ENCODE measurements at regions of chr16 and their contacts with region 1.

Region 1: DNA sequence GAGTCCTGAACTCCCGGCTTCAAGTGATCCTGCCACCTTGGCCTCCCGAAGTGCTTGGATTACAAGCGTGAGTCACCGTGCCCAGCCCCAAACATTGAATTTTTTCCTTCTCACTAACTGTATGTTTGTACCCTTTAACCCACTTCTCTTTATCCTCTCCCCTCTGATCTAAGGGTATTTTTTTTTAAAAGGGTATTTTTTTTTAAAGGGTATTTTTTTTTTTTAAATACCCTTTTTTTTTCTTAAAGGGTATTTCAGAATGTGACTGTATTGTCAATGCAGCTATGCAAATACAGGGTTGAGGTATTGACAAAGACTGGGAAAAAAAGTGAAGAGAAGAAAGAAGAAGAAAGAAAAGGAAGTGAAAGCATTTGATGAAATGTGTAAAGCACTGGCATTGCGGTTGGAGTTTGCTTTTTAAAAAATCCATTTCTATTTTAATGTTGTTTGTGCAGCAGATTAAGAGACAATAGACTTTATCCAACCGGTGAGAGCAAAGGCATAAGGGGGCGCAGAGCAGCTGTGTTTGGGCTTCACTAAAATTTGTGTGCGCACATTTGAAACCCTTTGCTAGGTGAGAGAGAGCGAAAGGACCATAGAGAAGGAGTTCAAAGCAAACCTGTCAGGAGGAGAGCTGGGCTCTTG is 42.4 kb downstream of the SYT17 start:
- DNase-seq: peak; percentile 85
- ATAC-seq: peak; percentile 73
- H3K4me3 ChIP-seq: peak overlapping the region in 4 of 5 experiments; percentile 32 to 63 (median 48)
- H3K4me3 Mint-ChIP-seq: peak overlapping the region; percentile 85
- H3K27ac ChIP-seq: peak overlapping the region; percentile 96
- H3K27ac Mint-ChIP-seq: peak overlapping the region; percentile 95
- H3K4me1 ChIP-seq: peaks cover 41 to 71% of the 10 kb centered on the region in 2 donors
- H3K4me1 Mint-ChIP-seq: peaks cover 60% of the 10 kb centered on the region
- H3K27me3 ChIP-seq: no peaks in the 10 kb centered on the region
- H3K27me3 Mint-ChIP-seq: no peaks in the 10 kb centered on the region
- CTCF ChIP-seq: no peak

Region 2: GRCh38 chr16:19113453-19114351 is 96.7 kb before region 1 on chr16 and contains the start of gene ITPRIPL2:
- CTCF ChIA-PET with region 1: no interaction called
- POLR2A ChIA-PET with region 1: no interaction called
- intact Hi-C with region 1: loop called (anchors 5 kb)
- DNase-seq: peak; percentile 54
- ATAC-seq: peak; percentile 41
- H3K4me3 ChIP-seq: peak within 1 kb of the TSS in 4 of 5 experiments; percentile 28 to 53 (median 43)
- H3K4me3 Mint-ChIP-seq: peak within 1 kb of the TSS; percentile 86
- H3K27ac ChIP-seq: no peak within 1 kb of the TSS
- H3K27ac Mint-ChIP-seq: peak within 1 kb of the TSS; percentile 84
- H3K4me1 ChIP-seq: peaks cover 20 to 30% of the 10 kb centered on the region in 2 donors
- H3K4me1 Mint-ChIP-seq: peaks cover 38% of the 10 kb centered on the region
- H3K27me3 ChIP-seq: peaks cover 0 to 12% (median 0%) of the 10 kb centered on the region in 4 experiments
- H3K27me3 Mint-ChIP-seq: peaks cover 13% of the 10 kb centered on the region
- CTCF ChIP-seq: no peak
- total RNA-seq, gene ITPRIPL2: 14.6 and 15.4 TPM in 2 replicates

Region 3: DNA sequence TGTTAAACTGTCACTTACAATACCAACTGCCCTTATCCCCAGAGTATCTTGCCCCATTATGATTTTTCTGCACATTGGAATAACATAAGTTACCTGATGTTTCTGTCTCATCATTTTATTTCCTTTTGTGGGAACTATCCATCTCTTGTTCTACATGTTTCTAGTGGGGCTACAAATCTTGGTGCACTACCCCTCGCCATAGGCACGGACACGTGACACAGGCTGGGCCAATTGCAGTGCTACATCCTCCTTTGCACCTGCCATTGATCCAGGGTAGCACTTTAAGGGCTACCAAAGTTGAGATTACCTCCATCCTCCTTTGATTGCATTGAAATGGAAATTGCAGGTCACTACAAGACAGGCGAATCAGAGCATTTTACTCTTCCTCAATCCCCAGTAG is 56.5 kb before region 1 on chr16:
- CTCF ChIA-PET with region 1: no interaction called
- POLR2A ChIA-PET with region 1: no interaction called
- intact Hi-C with region 1: no loop called
- DNase-seq: no peak
- ATAC-seq: no peak
- H3K4me3 ChIP-seq: no peak overlapping the region
- H3K4me3 Mint-ChIP-seq: no peak overlapping the region
- H3K27ac ChIP-seq: no peak overlapping the region
- H3K27ac Mint-ChIP-seq: no peak overlapping the region
- H3K4me1 ChIP-seq: no peaks in the 10 kb centered on the region
- H3K4me1 Mint-ChIP-seq: no peaks in the 10 kb centered on the region
- H3K27me3 ChIP-seq: peaks cover 0 to 3% (median 0%) of the 10 kb centered on the region in 4 experiments
- H3K27me3 Mint-ChIP-seq: peaks cover 13% of the 10 kb centered on the region
- CTCF ChIP-seq: no peak

Region 4: DNA sequence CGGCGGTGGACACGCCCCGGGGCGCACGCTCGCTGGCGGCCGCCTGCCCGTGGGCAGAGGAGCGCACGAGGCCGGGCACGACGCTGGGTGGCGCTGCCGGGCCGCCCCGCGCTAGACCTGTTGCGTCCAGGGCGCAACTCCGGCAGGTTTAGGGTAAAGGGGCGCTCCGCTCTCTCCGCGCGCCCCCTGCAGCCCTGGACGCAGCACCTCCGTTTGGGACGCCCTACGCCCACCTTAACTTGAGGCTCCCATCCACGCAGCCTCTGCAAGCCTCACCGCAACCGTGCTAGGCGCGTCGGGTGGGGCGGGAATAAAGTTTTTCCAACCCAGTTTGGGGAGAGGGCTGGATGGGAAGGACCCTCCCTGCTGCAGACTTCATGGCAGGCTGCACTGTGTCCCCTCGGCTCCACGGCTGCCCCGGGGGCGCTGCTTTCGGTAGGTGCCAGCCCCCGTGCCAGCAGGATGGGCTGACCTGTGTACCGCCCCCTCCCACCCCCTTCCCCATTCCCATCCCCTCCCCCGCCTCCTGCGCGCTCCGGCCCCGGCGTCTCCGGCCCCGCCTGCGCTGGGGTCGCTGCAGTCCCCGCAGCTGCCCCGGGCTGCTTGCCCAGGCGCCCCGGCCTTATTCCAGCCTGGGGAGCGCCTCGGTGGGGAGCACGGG is 42.6 kb before region 1 on chr16 and contains the start of gene SYT17:
- CTCF ChIA-PET with region 1: no interaction called
- POLR2A ChIA-PET with region 1: no interaction called
- intact Hi-C with region 1: loop called (anchors 1 kb)
- DNase-seq: peak; percentile 85
- ATAC-seq: peak; percentile 88
- H3K4me3 ChIP-seq: peak within 1 kb of the TSS in 4 of 5 experiments; percentile 50 to 69 (median 59)
- H3K4me3 Mint-ChIP-seq: peak within 1 kb of the TSS; percentile 85
- H3K27ac ChIP-seq: peak within 1 kb of the TSS in 1 of 2 donors; percentile 3
- H3K27ac Mint-ChIP-seq: peak within 1 kb of the TSS; percentile 81
- H3K4me1 ChIP-seq: peaks cover 11 to 28% of the 10 kb centered on the region in 2 donors
- H3K4me1 Mint-ChIP-seq: peaks cover 30% of the 10 kb centered on the region
- H3K27me3 ChIP-seq: peaks cover 0 to 16% (median 0%) of the 10 kb centered on the region in 4 experiments
- H3K27me3 Mint-ChIP-seq: peaks cover 11% of the 10 kb centered on the region
- CTCF ChIP-seq: peak; percentile 82
- total RNA-seq, gene SYT17: 25.1 and 27.7 TPM in 2 replicates

Region 5: GRCh38 chr16:19375561-19376158 is 165.3 kb after region 1 on chr16:
- CTCF ChIA-PET with region 1: interaction called, 6 read pairs
- POLR2A ChIA-PET with region 1: no interaction called
- intact Hi-C with region 1: loop called (anchors 2 kb)
- DNase-seq: peak; percentile 77
- ATAC-seq: peak; percentile 76
- H3K4me3 ChIP-seq: no peak overlapping the region
- H3K4me3 Mint-ChIP-seq: no peak overlapping the region
- H3K27ac ChIP-seq: no peak overlapping the region
- H3K27ac Mint-ChIP-seq: no peak overlapping the region
- H3K4me1 ChIP-seq: no peaks in the 10 kb centered on the region
- H3K4me1 Mint-ChIP-seq: no peaks in the 10 kb centered on the region
- H3K27me3 ChIP-seq: no peaks in the 10 kb centered on the region
- H3K27me3 Mint-ChIP-seq: no peaks in the 10 kb centered on the region
- CTCF ChIP-seq: peak; percentile 96

Region 6: GRCh38 chr16:19488213-19488640 is 277.8 kb after region 1 on chr16:
- CTCF ChIA-PET with region 1: no interaction called
- POLR2A ChIA-PET with region 1: no interaction called
- intact Hi-C with region 1: loop called (anchors 2 kb)
- DNase-seq: no peak
- ATAC-seq: no peak
- H3K4me3 ChIP-seq: no peak overlapping the region
- H3K4me3 Mint-ChIP-seq: no peak overlapping the region
- H3K27ac ChIP-seq: no peak overlapping the region
- H3K27ac Mint-ChIP-seq: no peak overlapping the region
- H3K4me1 ChIP-seq: peaks cover under 1 to 2% of the 10 kb centered on the region in 2 donors
- H3K4me1 Mint-ChIP-seq: no peaks in the 10 kb centered on the region
- H3K27me3 ChIP-seq: no peaks in the 10 kb centered on the region
- H3K27me3 Mint-ChIP-seq: no peaks in the 10 kb centered on the region
- CTCF ChIP-seq: no peak

Measured in B cell (primary cell).